ENCODE measurements at regions of chr21 and their contacts with region 1.

Region 1: DNA sequence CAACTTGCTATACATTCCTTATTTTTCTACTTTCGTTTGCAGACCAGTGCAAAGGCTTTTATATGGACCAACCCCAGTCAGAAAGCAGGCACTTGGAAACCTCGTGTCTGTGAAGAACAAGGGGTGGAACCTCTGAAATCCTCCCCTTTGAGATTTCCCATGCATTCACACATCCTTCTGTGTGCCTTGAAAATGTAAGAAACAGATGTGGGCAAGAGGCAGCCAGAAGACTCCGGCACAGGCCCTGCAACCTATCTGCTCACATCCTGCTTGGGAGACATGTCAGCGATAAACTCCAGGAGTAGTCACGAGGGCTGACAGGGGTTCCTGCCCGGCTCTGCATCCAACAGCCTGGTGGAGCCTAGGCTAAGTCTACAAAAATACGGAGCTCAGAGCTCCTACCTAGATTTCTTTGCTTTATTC is 42.5 kb downstream of the ETS2 start:
- DNase-seq: no peak
- H3K4me3 ChIP-seq: no peak overlapping the region
- H3K27ac ChIP-seq: peak overlapping the region in 2 of 4 donors; percentile 24 to 44
- H3K4me1 ChIP-seq: no peaks in the 10 kb centered on the region
- H3K27me3 ChIP-seq: no peaks in the 10 kb centered on the region
- CTCF ChIP-seq: no peak
- EP300 ChIP-seq: peak; percentile 26
- POLR2A ChIP-seq: no peak

Region 2: GRCh38 chr21:38831526-38832467 is 16.4 kb before region 1 on chr21:
- in situ Hi-C with region 1: no loop called
- intact Hi-C with region 1: loop called (anchors 2 kb)
- DNase-seq: peak; percentile 78
- H3K4me3 ChIP-seq: no peak overlapping the region
- H3K27ac ChIP-seq: peak overlapping the region; percentile 43 to 75 (median 62)
- H3K4me1 ChIP-seq: peaks cover 0 to 17% (median 10%) of the 10 kb centered on the region in 4 donors
- H3K27me3 ChIP-seq: no peaks in the 10 kb centered on the region
- CTCF ChIP-seq: no peak
- EP300 ChIP-seq: peak; percentile 32
- POLR2A ChIP-seq: no peak